ENCODE measurements at regions of chr1 and their contacts with region 1.

Region 1: DNA sequence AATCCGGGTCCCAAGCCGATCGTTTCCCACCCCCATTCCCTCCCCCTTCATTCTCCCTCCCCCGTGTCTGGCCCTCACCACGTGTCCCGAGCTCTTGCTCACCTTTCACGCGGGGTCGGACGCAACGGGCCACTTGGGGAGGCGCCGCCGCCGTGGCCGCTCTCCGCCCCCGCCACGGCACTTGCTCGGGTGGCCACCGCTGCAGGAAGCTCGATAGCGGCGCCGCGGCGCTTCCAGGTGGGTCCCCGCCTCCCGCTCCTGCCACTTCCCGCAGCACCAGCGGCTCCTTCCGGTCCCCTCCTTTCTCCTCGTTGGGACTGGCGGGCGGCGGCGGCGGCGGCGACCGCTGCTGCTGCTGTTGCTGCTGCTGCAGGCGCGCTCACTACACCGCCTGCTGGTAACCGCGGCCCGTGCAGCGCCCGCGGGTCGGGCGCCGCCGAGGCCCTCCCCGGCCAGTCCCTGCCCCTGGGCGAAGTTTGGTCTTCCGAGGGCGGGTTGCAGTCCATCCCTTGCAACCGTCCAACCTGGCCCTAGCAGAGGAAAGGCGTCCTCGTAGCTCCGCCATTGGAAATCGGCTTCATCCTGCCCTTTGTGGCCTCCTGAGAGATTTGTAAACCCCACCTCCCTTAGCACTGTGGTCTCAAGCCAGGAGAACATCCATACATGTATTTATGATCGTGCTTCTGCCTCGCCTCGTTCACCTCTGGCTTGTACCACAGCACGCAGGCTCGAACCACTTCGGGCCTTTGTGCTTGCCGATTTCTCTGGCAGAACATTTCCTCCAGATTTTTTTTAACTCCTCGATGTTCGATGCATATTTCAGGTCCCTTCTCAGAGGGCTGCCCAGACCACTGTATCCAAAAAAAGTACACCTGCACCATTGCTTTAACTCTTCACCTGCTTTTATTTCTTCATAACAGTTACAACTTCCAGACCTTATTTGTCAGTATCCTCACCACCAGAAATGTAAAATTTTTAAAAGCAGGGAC is 996 bp upstream of the ZZZ3 start:
- H3K4me3 ChIP-seq: peak overlapping the region; percentile 83
- H3K27ac ChIP-seq: peak overlapping the region; percentile 95
- H3K4me1 ChIP-seq: peaks cover 9% of the 10 kb centered on the region; the same call in 1 of the 2 replicates
- CTCF ChIP-seq: no peak; the same call in 1 of the 2 replicates

Region 2: GRCh38 chr1:77779529-77780281 is 96.3 kb after region 1 on chr1 and contains the start of gene MIGA1:
- CTCF ChIA-PET with region 1: no interaction called
- POLR2A ChIA-PET with region 1: interaction called, 13 read pairs
- H3K4me3 ChIP-seq: peak within 1 kb of the TSS; percentile 84
- H3K27ac ChIP-seq: peak within 1 kb of the TSS; percentile 57; the same call in 1 of the 2 replicates
- H3K4me1 ChIP-seq: 0 out of 2 replicates have a peak, but pooled peaks cover 7% of the 10 kb centered on the region
- CTCF ChIP-seq: 0 out of 2 replicates have a peak, but pooled peaks have one; percentile 20